Endothelial cell of umbilical vein (primary cell): ENCODE measurements at regions of chr16 and their contacts with region 1.

Region 1: GRCh38 chr16:3129137-3130131 is 5.4 kb upstream of the ZNF213 start:
- DNase-seq: peak; percentile 80
- H3K4me3 ChIP-seq: no peak overlapping the region
- H3K27ac ChIP-seq: no peak overlapping the region
- H3K4me1 ChIP-seq: peaks cover 8% of the 10 kb centered on the region
- H3K27me3 ChIP-seq: no peaks in the 10 kb centered on the region
- CTCF ChIP-seq: peak; percentile 86 to 89
- POLR2A ChIP-seq: peak; percentile 48

Region 2: GRCh38 chr16:3023669-3024478 is 105.6 kb before region 1 on chr16 and contains the starts of genes HCFC1R1 and THOC6:
- CTCF ChIA-PET with region 1: interaction called, 138 read pairs
- POLR2A ChIA-PET with region 1: interaction called, 5 read pairs
- dilution Hi-C with region 1: no loop called
- intact Hi-C with region 1: no loop called
- DNase-seq: peak; percentile 98
- H3K4me3 ChIP-seq: peak within 1 kb of the TSS; percentile 0 to 61 (median 53)
- H3K27ac ChIP-seq: peak within 1 kb of the TSS; percentile 98
- H3K4me1 ChIP-seq: peaks cover 18% of the 10 kb centered on the region
- H3K27me3 ChIP-seq: peaks cover under 1 to 2% of the 10 kb centered on the region in 2 experiments
- CTCF ChIP-seq: no peak
- POLR2A ChIP-seq: peak; percentile 62
- total RNA-seq, gene HCFC1R1: 25.8 and 28.7 TPM in 2 replicates
- total RNA-seq, gene THOC6: 23.9 and 24.1 TPM in 2 replicates

Region 3: GRCh38 chr16:3059000-3059722 is 70.3 kb before region 1 on chr16:
- CTCF ChIA-PET with region 1: interaction called, 113 read pairs
- POLR2A ChIA-PET with region 1: interaction called, 5 read pairs
- dilution Hi-C with region 1: no loop called
- intact Hi-C with region 1: loop called (anchors 1 kb)
- DNase-seq: peak; percentile 85
- H3K4me3 ChIP-seq: peak overlapping the region; percentile 44 to 64 (median 59)
- H3K27ac ChIP-seq: peak overlapping the region; percentile 58
- H3K4me1 ChIP-seq: peaks cover 9% of the 10 kb centered on the region
- H3K27me3 ChIP-seq: no peaks in the 10 kb centered on the region
- CTCF ChIP-seq: peak; percentile 73 to 84
- POLR2A ChIP-seq: peak; percentile 76

Region 4: DNA sequence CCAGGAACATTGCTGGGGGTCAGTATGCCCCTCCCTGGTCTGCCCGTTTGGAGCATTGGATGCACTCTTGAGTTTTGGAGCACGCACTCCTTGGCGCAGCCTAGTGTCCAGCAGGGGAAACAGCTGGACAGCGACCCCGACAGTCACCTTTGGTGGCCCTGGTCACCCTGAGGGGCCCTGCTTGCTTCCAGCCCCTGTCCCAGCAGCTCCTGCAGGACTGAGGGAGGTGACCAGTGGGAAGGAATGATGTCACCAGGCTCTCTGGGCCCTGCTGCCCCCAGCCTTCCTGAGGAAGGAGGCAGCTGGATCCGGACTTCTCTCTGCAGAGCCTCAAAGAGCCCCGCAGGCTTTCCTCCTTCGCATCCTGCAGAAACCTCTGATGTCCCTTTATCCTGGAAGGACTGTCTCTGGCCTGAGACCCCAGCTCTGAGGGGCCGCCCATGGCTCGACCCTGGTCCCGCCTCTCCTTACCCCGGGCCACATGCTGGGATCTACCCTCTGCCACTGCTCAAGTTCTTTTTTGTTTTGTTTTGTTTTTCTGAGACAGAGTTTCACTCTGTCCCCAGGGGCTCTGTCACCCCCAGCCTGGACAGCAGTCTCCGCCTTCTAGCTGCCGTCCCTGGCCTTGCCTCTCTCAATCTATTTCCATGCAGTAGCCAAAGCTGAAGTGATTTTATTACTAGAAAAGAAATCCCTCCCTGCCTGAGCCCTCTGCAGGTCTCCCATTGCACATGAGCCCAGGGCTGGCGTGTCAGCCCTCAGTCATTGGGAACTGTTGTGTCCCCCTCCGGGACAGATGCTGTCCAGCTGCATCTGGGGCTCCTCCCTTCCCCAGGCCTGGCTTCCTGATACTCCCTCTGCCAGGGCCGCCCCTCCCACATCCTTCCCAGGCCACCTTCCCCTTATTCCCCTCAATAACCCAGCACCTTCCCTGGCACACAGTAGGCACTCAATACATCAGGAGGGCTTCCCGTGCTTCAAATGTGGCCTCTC is 41.9 kb before region 1 on chr16:
- CTCF ChIA-PET with region 1: interaction called, 16 read pairs
- POLR2A ChIA-PET with region 1: no interaction called
- dilution Hi-C with region 1: no loop called
- intact Hi-C with region 1: loop called (anchors 2 kb)
- DNase-seq: peak; percentile 89
- H3K4me3 ChIP-seq: peak overlapping the region in 1 of 3 experiments; percentile 5
- H3K27ac ChIP-seq: peak overlapping the region; percentile 73
- H3K4me1 ChIP-seq: peaks cover 25% of the 10 kb centered on the region
- H3K27me3 ChIP-seq: no peaks in the 10 kb centered on the region
- CTCF ChIP-seq: peak; percentile 3 to 23
- POLR2A ChIP-seq: peak; percentile 52

Region 5: DNA sequence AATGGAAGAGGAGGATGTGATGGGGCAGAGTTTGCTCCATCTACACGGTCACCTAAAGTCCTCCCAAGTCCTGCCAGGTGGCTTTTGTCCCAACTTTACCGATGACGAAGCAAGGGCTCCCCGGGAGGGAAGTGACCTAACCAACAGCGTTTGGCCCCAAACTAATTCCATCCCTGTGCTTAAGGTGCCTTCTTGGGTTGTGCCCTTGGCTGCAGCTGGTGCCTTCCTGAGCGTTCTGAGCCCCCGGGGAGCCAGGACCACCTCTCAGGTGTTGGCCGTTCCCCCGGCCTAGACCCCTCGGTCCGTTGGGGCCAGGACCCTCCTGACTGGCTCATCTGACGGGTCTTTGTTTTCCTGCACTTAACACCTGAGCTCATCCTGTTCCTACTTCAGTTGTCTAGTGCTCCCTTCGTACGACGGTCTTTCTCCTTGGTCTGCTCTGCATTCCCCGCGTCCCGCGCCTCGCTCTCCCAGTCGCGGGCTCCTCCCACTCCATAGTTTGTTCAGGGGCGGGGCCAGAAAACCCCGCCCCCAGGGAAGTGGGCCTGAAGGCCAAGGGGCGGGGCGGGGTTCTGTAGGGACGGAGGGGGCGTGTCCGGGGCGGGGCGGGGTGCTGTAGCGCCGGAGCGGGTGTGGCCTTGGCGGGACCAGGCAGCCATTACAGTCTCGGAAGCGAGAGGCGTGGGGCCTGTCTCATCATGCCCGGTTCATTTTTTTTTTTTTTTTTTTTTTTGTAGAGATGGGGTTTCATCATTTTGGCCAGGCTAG is 29.5 kb before region 1 on chr16:
- CTCF ChIA-PET with region 1: interaction called, 49 read pairs
- POLR2A ChIA-PET with region 1: interaction called, 3 read pairs
- dilution Hi-C with region 1: no loop called
- intact Hi-C with region 1: loop called (anchors 1 kb)
- DNase-seq: peak; percentile 81
- H3K4me3 ChIP-seq: no peak overlapping the region
- H3K27ac ChIP-seq: no peak overlapping the region
- H3K4me1 ChIP-seq: peaks cover 26% of the 10 kb centered on the region
- H3K27me3 ChIP-seq: peaks cover 0 to 2% of the 10 kb centered on the region in 2 experiments
- CTCF ChIP-seq: no peak
- POLR2A ChIP-seq: no peak

Region 6: DNA sequence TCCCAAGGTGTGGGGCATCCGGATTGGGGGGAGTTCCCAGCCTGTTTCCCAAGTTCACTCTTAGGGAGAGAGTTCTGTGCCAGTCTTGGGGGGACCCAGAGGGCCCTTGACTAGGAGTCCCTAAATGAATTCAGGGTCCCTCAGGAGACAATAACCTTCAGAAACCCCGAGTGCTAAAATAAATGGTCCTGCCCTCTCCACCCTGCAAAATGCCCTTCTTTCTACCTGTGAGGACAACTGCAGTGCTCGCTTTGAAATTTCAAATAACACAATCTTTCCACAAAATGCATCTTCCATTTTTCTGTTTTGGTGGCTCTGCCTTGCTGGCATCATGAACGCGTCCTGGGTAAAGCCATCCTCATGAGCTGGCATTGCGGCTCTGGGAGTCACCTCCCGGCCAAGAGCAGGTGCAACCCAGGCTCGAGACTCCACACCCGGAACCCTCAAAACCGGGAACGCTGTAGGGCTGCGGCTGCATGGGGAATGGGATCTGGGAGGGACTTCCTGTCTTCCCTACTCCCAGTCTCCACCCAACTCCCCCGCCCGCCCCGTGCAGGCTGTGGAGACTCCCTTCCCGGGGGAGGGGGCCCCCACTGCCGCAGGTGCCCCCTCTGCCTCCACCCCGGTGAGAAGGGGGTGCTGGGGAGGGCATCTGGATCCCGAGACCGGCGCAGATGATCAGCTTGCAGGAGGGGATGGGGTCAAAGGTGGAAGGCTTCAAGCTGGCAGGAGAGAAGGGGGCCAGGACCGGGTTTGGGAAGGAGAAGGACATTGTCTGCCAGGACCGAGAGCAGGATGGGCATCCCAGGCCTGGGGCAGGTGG is 17.2 kb before region 1 on chr16 and contains the start of gene ZNF205:
- CTCF ChIA-PET with region 1: interaction called, 23 read pairs
- POLR2A ChIA-PET with region 1: interaction called, 3 read pairs
- dilution Hi-C with region 1: no loop called
- intact Hi-C with region 1: loop called (anchors 2 kb)
- DNase-seq: peak; percentile 61
- H3K4me3 ChIP-seq: peak within 1 kb of the TSS; percentile 44 to 78 (median 59)
- H3K27ac ChIP-seq: no peak within 1 kb of the TSS
- H3K4me1 ChIP-seq: peaks cover 18% of the 10 kb centered on the region
- H3K27me3 ChIP-seq: no peaks in the 10 kb centered on the region
- CTCF ChIP-seq: no peak
- POLR2A ChIP-seq: peak; percentile 34
- total RNA-seq, gene ZNF205: 15.5 and 18.5 TPM in 2 replicates

Region 7: GRCh38 chr16:3158471-3159314 is 29.3 kb after region 1 on chr16:
- CTCF ChIA-PET with region 1: interaction called, 13 read pairs
- POLR2A ChIA-PET with region 1: interaction called, 3 read pairs
- dilution Hi-C with region 1: no loop called
- intact Hi-C with region 1: no loop called
- DNase-seq: peak; percentile 84
- H3K4me3 ChIP-seq: peak overlapping the region; percentile 70 to 82 (median 76)
- H3K27ac ChIP-seq: peak overlapping the region; percentile 76
- H3K4me1 ChIP-seq: peaks cover 17% of the 10 kb centered on the region
- H3K27me3 ChIP-seq: no peaks in the 10 kb centered on the region
- CTCF ChIP-seq: no peak
- POLR2A ChIP-seq: no peak